HEK293T (cell line): ENCODE measurements at regions of chr12 and their contacts with region 1.

Region 1: GRCh38 chr12:68807576-68808387 is at the start of gene MDM2:
- DNase-seq: peak; percentile 89

Region 2: DNA sequence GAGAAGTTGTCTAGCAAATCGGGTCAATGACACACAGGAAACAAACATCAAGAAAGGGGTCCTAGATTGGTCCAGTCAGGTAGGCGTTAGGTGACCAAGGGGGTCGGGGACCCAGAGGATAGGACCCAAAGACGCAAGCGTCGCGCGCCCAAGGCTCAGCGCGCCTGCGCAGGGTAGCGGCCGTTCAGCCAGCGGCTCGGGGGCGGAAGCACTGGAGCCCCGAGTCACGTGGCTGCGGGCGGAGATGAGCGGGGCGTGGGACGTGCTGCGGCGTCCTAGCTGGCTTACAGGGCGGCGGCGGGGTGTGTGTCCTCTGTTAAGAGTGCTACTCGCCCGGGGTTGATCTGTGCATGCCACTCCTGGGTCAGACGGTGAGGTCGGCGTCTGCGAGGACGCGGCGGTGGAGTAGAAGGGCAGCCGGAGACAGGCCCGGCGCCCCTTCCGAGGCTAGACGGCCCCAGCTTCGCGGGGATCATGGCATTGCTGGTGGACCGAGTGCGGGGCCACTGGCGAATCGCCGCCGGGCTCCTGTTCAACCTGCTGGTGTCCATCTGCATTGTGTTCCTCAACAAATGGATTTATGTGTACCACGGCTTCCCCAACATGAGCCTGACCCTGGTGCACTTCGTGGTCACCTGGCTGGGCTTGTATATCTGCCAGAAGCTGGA is 61.7 kb before region 1 on chr12 and contains the start of gene SLC35E3:
- CTCF ChIA-PET with region 1: no interaction called
- POLR2A ChIA-PET with region 1: interaction called, 44 read pairs
- DNase-seq: peak; percentile 98